PC-3 (cell line): ENCODE measurements at regions of chr5 and their contacts with region 1.

Region 1: DNA sequence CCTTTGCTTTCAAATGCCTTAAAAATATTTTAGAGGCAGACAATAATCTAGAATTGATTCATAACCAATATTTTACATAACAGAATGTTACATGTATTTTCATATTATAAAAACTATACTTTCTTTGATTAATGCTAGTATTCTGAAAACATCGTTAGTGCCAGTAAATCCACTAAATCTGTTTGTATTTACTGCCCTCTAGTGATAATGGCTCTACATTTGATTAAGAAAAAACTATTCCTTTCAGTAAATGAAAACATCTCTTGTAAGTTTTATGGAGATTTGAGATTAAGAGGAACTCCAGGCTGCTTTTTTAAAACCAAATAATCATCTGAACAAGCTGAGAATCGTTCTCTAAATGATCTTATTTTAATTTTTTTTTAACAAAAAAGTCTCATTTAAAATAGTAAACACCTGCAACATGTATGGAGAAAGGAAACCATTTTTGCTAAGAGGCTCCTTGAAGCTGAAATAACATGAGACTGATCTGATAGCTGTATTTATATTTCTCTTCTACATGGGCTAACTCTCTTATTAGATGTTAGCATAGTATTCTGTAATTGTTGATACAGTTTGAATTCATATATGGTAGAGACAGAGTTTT is 424.7 kb downstream of the RAB3C start:
- DNase-seq: peak; percentile 55
- ATAC-seq: no peak; the same call in 1 of the 2 replicates
- H3K4me3 ChIP-seq: no peak overlapping the region
- H3K27ac ChIP-seq: no peak overlapping the region
- H3K4me1 ChIP-seq: no peaks in the 10 kb centered on the region
- H3K27me3 ChIP-seq: no peaks in the 10 kb centered on the region
- CTCF ChIP-seq: peak; percentile 63

Region 2: GRCh38 chr5:58871648-58872242 is 135.8 kb before region 1 on chr5:
- CTCF ChIA-PET with region 1: no interaction called
- POLR2A ChIA-PET with region 1: no interaction called
- intact Hi-C with region 1: loop called (anchors 5 kb)
- DNase-seq: peak; percentile 57
- ATAC-seq: peak; percentile 46; the same call in 1 of the 2 replicates
- H3K4me3 ChIP-seq: no peak overlapping the region
- H3K27ac ChIP-seq: no peak overlapping the region
- H3K4me1 ChIP-seq: no peaks in the 10 kb centered on the region
- H3K27me3 ChIP-seq: peaks cover under 1% of the 10 kb centered on the region; the same call in 1 of the 2 replicates
- CTCF ChIP-seq: peak; percentile 47

Region 3: GRCh38 chr5:58940446-58940845 is 67.1 kb before region 1 on chr5:
- CTCF ChIA-PET with region 1: no interaction called
- POLR2A ChIA-PET with region 1: no interaction called
- intact Hi-C with region 1: no loop called
- DNase-seq: no peak
- ATAC-seq: no peak
- H3K4me3 ChIP-seq: no peak overlapping the region
- H3K27ac ChIP-seq: no peak overlapping the region
- H3K4me1 ChIP-seq: peaks cover 11% of the 10 kb centered on the region
- H3K27me3 ChIP-seq: no peaks in the 10 kb centered on the region
- CTCF ChIP-seq: no peak

Region 4: DNA sequence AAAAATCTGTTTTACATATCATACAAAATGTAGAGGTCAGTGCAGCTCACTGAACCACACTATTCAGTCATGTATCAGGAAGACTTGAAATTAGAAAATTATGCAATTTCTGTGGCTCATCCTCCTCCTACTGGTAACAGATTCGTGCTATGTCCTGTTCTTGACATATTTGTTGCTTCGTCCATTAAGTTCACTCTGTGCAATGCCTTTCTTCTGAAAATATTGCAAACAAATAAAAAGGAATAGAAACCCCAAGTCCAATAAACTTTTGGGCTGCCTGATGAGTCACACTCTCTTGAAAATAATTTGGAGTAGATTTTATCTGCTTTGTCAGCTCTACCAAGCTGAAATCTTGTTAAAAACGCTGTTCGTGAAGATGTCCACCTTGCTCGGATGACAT is 33.5 kb before region 1 on chr5:
- CTCF ChIA-PET with region 1: no interaction called
- POLR2A ChIA-PET with region 1: no interaction called
- intact Hi-C with region 1: no loop called
- DNase-seq: peak; percentile 41
- ATAC-seq: peak; percentile 73
- H3K4me3 ChIP-seq: no peak overlapping the region
- H3K27ac ChIP-seq: no peak overlapping the region
- H3K4me1 ChIP-seq: peaks cover 10% of the 10 kb centered on the region; the same call in 1 of the 2 replicates
- H3K27me3 ChIP-seq: no peaks in the 10 kb centered on the region
- CTCF ChIP-seq: 0 out of 2 replicates have a peak, but pooled peaks have one; percentile 12